ENCODE measurements at regions of chr14 and their contacts with region 1.

Region 1: GRCh38 chr14:51828017-51828797 is 32.2 kb upstream of the GNG2 start:
- DNase-seq: peak; percentile 89
- H3K4me3 Mint-ChIP-seq: no peak overlapping the region
- H3K27ac Mint-ChIP-seq: peak overlapping the region; percentile 48
- H3K4me1 Mint-ChIP-seq: no peaks in the 10 kb centered on the region
- H3K27me3 Mint-ChIP-seq: no peaks in the 10 kb centered on the region

Region 2: GRCh38 chr14:51774209-51774608 is 54.0 kb before region 1 on chr14:
- CTCF ChIA-PET with region 1: no interaction called
- intact Hi-C with region 1: no loop called
- DNase-seq: no peak
- H3K4me3 Mint-ChIP-seq: no peak overlapping the region
- H3K27ac Mint-ChIP-seq: no peak overlapping the region
- H3K4me1 Mint-ChIP-seq: peaks cover 4% of the 10 kb centered on the region
- H3K27me3 Mint-ChIP-seq: no peaks in the 10 kb centered on the region

Region 3: DNA sequence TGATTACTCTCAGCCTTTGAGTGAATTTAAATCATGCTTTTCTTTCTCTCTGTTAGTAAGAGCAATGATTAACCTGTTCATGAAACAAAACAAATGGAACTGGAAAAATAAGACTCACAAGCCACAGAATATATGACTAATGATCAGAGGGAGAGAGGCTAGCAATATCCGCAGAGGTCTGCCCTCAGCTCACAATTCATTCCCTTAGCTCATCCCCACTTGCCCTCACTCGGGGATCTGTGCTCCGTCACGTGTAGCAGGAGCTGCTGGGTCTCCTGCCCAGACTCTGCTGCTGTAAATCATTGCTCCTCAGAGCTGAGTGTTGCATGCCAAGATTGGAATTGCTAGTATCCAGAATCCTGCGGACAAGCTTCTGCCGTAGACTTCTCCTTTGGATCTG is 20.9 kb before region 1 on chr14:
- CTCF ChIA-PET with region 1: no interaction called
- intact Hi-C with region 1: no loop called
- DNase-seq: no peak
- H3K4me3 Mint-ChIP-seq: no peak overlapping the region
- H3K27ac Mint-ChIP-seq: no peak overlapping the region
- H3K4me1 Mint-ChIP-seq: no peaks in the 10 kb centered on the region
- H3K27me3 Mint-ChIP-seq: no peaks in the 10 kb centered on the region

Region 4: DNA sequence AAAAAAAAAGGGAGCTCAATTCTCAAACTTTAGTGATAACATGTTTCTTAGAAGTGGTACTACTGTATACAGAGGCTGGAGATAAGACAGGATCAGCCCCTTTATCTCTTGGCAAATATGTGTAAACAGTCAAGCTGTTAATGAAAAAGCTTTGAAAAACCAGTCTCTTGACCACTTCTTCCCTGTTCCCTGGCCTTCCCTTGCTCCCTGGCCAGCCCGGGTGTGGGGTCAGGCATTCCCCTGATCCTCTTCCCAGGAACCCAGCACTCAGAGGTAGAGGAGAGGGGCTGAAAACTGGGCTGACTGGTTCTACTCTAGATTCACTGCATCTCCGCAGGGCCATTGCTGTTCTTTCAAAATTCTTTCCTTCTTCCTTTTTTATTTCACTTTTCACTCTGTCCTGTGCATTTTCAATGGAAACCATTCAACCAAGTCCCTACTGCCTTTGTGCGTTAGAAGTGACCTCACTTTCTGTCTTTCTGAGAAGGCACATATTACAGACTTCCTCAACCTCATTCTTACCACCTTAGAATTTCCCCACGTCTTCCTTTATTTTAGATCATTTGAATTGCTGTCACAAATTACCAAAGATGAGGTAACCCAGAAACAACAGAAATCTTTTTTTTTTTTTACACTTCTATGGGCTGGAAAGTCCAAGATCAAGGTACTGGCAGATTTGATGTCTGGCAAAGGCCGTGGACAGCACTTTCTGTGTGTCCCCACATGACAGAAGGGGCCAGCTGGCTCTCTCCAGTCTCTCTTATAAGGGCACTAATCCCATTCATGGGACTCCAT is 37.9 kb after region 1 on chr14:
- CTCF ChIA-PET with region 1: interaction called, 4 read pairs
- intact Hi-C with region 1: loop called (anchors 1 kb)
- DNase-seq: no peak
- H3K4me3 Mint-ChIP-seq: no peak overlapping the region
- H3K27ac Mint-ChIP-seq: no peak overlapping the region
- H3K4me1 Mint-ChIP-seq: peaks cover 27% of the 10 kb centered on the region
- H3K27me3 Mint-ChIP-seq: no peaks in the 10 kb centered on the region

Region 5: GRCh38 chr14:51963286-51963685 is 135.1 kb after region 1 on chr14:
- CTCF ChIA-PET with region 1: no interaction called
- intact Hi-C with region 1: no loop called
- DNase-seq: no peak
- H3K4me3 Mint-ChIP-seq: peak overlapping the region; percentile 54
- H3K27ac Mint-ChIP-seq: peak overlapping the region; percentile 34
- H3K4me1 Mint-ChIP-seq: peaks cover 43% of the 10 kb centered on the region
- H3K27me3 Mint-ChIP-seq: no peaks in the 10 kb centered on the region

Measured in activated naive CD4-positive, alpha-beta T cell treated with anti-CD3 and anti-CD28 coated beads for 36 hours (primary cell).